CD14-positive monocyte (primary cell): ENCODE measurements at regions of chr11 and their contacts with region 1.

Region 1: GRCh38 chr11:7520981-7521487 is 7.2 kb downstream of the PPFIBP2 start:
- DNase-seq: peak; percentile 47 to 60 (median 60)
- H3K4me3 ChIP-seq: peak overlapping the region in 1 of 3 experiments; percentile 39
- H3K4me3 Mint-ChIP-seq: no peak overlapping the region
- H3K27ac ChIP-seq: peak overlapping the region; percentile 54 to 83
- H3K27ac Mint-ChIP-seq: no peak overlapping the region
- H3K4me1 ChIP-seq: peaks cover 68 to 71% of the 10 kb centered on the region in 2 donors
- H3K4me1 Mint-ChIP-seq: peaks cover 26% of the 10 kb centered on the region
- H3K27me3 ChIP-seq: no peaks in the 10 kb centered on the region
- H3K27me3 Mint-ChIP-seq: peaks cover 0 to 3% (median 2%) of the 10 kb centered on the region in 3 donors
- CTCF ChIP-seq: no peak

Region 2: DNA sequence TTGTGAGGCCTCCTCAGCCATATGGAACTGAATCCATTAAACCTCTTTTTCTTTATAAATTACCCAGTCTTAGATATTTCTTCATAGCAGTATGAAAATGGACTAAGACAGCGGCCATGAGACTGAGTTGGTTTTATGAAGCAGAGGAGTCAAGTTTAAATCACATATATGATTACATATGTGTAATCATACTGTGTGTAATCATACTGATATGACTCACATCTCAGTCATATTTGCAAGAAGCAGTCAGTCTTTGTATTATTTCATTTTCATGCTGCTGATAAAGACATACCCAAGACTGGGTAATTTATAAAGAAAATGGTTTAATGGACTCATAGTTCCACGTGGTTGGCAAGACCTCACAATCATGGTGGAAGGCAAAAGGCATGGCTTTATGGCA is 179.5 kb before region 1 on chr11:
- intact Hi-C with region 1: no loop called
- DNase-seq: no peak
- H3K4me3 ChIP-seq: no peak overlapping the region
- H3K4me3 Mint-ChIP-seq: no peak overlapping the region
- H3K27ac ChIP-seq: no peak overlapping the region
- H3K27ac Mint-ChIP-seq: no peak overlapping the region
- H3K4me1 ChIP-seq: no peaks in the 10 kb centered on the region
- H3K4me1 Mint-ChIP-seq: no peaks in the 10 kb centered on the region
- H3K27me3 ChIP-seq: peaks cover 0 to 4% of the 10 kb centered on the region in 2 donors
- H3K27me3 Mint-ChIP-seq: peaks cover 5 to 12% (median 11%) of the 10 kb centered on the region in 3 donors
- CTCF ChIP-seq: no peak

Region 3: DNA sequence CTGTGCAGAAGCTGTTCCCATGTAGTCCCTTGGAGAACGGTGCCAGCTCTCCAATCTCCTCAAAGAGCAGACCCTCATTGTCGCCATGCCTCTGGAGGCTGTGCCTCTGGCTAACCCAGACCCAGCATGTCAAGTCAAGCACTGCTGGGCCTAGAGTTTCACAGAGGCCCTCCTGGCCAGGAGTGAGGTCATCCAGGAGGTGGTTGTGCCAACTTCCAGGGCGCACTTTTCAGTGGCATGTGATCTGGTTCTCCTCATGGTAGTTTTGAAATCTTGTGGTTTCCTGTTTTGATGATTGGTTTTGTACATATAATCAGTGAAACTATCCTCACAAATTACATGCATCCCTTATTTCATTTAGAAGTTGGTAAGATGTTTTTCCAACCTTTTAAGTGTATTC is 71.7 kb after region 1 on chr11:
- intact Hi-C with region 1: loop called (anchors 5 to 10 kb)
- DNase-seq: peak; percentile 84 to 93 (median 92)
- H3K4me3 ChIP-seq: peak overlapping the region in 2 of 3 experiments; percentile 42 to 71
- H3K4me3 Mint-ChIP-seq: peak overlapping the region; percentile 63 to 85
- H3K27ac ChIP-seq: peak overlapping the region; percentile 87 to 90
- H3K27ac Mint-ChIP-seq: peak overlapping the region; percentile 92 to 98 (median 96)
- H3K4me1 ChIP-seq: peaks cover 48 to 73% of the 10 kb centered on the region in 2 donors
- H3K4me1 Mint-ChIP-seq: peaks cover 71% of the 10 kb centered on the region
- H3K27me3 ChIP-seq: no peaks in the 10 kb centered on the region
- H3K27me3 Mint-ChIP-seq: peaks cover 0 to 5% (median 0%) of the 10 kb centered on the region in 3 donors
- CTCF ChIP-seq: no peak

Region 4: GRCh38 chr11:7612661-7613393 is 91.8 kb after region 1 on chr11:
- intact Hi-C with region 1: no loop called
- DNase-seq: no peak
- H3K4me3 ChIP-seq: no peak overlapping the region
- H3K4me3 Mint-ChIP-seq: no peak overlapping the region
- H3K27ac ChIP-seq: no peak overlapping the region
- H3K27ac Mint-ChIP-seq: no peak overlapping the region
- H3K4me1 ChIP-seq: no peaks in the 10 kb centered on the region
- H3K4me1 Mint-ChIP-seq: no peaks in the 10 kb centered on the region
- H3K27me3 ChIP-seq: no peaks in the 10 kb centered on the region
- H3K27me3 Mint-ChIP-seq: peaks cover 0 to 9% (median 0%) of the 10 kb centered on the region in 3 donors
- CTCF ChIP-seq: no peak